Activated B cell treated with CpG ODN at 0.5 μM for 24 hours (primary cell): ENCODE measurements at regions of chrX and their contacts with region 1.

Region 1: DNA sequence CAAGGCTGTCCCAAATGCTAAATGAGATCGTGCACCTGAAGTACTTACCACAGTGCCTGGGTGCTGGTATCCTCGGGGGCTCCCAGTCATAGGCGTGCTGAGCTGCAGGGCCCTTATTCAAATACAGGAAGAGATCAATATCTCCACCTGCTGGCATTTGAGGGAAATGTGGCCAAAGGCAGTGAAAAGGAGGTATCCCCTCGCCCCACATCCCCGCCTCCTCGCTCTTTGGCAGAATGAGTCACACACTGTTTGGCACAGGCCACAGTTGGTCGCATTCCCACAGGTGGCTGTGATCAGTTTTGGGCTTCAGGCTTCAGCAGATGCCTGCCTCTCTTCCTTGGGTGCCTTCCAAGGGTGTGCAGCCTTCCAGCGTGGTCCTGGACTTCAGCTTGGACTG is 28.4 kb downstream of the ZNF185 start:
- DNase-seq: no peak
- ATAC-seq: peak; percentile 95
- H3K4me3 Mint-ChIP-seq: no peak overlapping the region
- H3K27ac Mint-ChIP-seq: no peak overlapping the region
- H3K4me1 Mint-ChIP-seq: no peaks in the 10 kb centered on the region
- H3K27me3 Mint-ChIP-seq: no peaks in the 10 kb centered on the region
- CTCF ChIP-seq: no peak

Region 2: GRCh38 chrX:151745651-151746050 is 1180.6 kb before region 1 on chrX:
- CTCF ChIA-PET with region 1: no interaction called
- POLR2A ChIA-PET with region 1: no interaction called
- intact Hi-C with region 1: loop called (anchors 5 kb)
- DNase-seq: no peak
- ATAC-seq: no peak
- H3K4me3 Mint-ChIP-seq: no peak overlapping the region
- H3K27ac Mint-ChIP-seq: no peak overlapping the region
- H3K4me1 Mint-ChIP-seq: no peaks in the 10 kb centered on the region
- H3K27me3 Mint-ChIP-seq: no peaks in the 10 kb centered on the region
- CTCF ChIP-seq: no peak

Region 3: DNA sequence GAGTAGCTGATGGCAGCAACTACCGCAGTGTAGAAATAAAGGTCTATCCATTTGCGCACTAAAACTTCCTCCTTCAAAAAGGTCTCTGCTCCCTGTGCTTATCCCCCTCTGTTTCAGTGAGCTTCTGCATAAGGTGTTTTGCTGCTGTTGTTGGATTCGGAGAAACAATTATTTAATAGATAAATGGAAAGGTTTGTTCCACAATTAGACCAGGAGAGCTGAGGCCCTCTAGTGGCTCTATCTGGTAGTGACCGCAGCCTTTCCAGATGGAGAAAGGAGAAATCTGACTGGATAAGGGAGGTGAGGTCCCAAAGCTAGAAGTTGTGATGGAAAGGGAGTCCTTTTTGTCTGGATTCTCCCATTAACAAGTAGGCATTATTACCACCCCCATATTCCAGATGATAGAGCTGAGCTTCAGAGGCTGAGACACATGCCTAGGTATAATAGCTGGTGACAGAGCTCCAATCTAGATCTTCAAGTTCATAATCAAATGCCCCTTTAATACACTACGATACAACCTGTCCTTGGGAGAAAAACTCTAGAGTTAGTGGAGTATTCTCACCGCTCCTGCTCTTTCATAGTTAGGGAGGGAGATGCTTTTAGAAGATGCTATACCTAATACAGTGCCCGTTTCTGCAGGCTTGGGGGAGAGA is 293.7 kb before region 1 on chrX:
- CTCF ChIA-PET with region 1: no interaction called
- POLR2A ChIA-PET with region 1: no interaction called
- intact Hi-C with region 1: loop called (anchors 5 kb)
- DNase-seq: no peak
- ATAC-seq: no peak
- H3K4me3 Mint-ChIP-seq: no peak overlapping the region
- H3K27ac Mint-ChIP-seq: no peak overlapping the region
- H3K4me1 Mint-ChIP-seq: no peaks in the 10 kb centered on the region
- H3K27me3 Mint-ChIP-seq: peaks cover 7% of the 10 kb centered on the region
- CTCF ChIP-seq: no peak

Region 4: GRCh38 chrX:152904151-152905080 is 21.9 kb before region 1 on chrX:
- CTCF ChIA-PET with region 1: no interaction called
- POLR2A ChIA-PET with region 1: no interaction called
- intact Hi-C with region 1: loop called (anchors 1 kb)
- DNase-seq: peak; percentile 25
- ATAC-seq: peak; percentile 71
- H3K4me3 Mint-ChIP-seq: no peak overlapping the region
- H3K27ac Mint-ChIP-seq: no peak overlapping the region
- H3K4me1 Mint-ChIP-seq: no peaks in the 10 kb centered on the region
- H3K27me3 Mint-ChIP-seq: peaks cover 6% of the 10 kb centered on the region
- CTCF ChIP-seq: no peak

Region 5: GRCh38 chrX:153075366-153075765 is 149.1 kb after region 1 on chrX:
- CTCF ChIA-PET with region 1: no interaction called
- POLR2A ChIA-PET with region 1: no interaction called
- intact Hi-C with region 1: no loop called
- DNase-seq: no peak
- ATAC-seq: no peak
- H3K4me3 Mint-ChIP-seq: no peak overlapping the region
- H3K27ac Mint-ChIP-seq: no peak overlapping the region
- H3K4me1 Mint-ChIP-seq: no peaks in the 10 kb centered on the region
- H3K27me3 Mint-ChIP-seq: no peaks in the 10 kb centered on the region
- CTCF ChIP-seq: no peak

Region 6: DNA sequence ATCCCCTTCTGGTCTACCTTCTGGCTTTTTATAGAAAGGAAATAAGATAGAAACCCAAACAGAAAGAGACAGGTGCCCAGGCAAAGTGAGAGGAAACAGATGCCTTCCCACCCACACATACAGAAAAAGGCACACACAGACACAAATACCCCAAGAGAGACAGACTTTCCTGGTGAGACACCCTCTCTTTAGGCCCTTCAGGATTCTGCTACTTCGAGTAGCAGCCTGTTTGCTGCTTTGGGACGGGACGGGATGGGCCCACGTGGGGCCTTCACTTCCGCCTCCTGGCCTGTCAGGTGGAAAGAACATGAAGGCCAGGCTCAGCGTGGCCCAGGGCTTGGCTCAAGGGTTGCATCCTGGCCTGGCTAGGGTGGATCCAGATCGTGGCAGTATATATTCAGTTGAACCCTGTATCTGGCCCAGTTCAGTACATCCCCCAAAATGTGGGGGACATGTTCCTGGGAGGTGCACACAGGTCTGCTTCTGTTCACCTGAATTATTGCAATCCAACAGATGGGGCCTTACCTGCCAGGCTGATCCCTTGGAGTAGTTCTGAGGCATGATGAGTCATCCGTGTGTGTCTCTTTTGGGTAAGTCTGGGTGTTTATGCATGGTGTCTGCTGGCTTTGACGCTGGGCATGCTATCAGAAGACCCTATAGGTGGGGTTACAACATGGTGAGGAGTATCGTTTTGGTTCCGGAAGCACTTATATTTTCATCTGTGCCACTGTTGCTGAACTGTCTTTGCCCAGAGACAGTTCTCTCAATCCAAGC is 410.0 kb after region 1 on chrX:
- CTCF ChIA-PET with region 1: no interaction called
- POLR2A ChIA-PET with region 1: no interaction called
- intact Hi-C with region 1: no loop called
- DNase-seq: no peak
- ATAC-seq: peak; percentile 8
- H3K4me3 Mint-ChIP-seq: peak overlapping the region; percentile 85
- H3K27ac Mint-ChIP-seq: peak overlapping the region; percentile 77
- H3K4me1 Mint-ChIP-seq: peaks cover 55% of the 10 kb centered on the region
- H3K27me3 Mint-ChIP-seq: no peaks in the 10 kb centered on the region
- CTCF ChIP-seq: no peak

Region 7: DNA sequence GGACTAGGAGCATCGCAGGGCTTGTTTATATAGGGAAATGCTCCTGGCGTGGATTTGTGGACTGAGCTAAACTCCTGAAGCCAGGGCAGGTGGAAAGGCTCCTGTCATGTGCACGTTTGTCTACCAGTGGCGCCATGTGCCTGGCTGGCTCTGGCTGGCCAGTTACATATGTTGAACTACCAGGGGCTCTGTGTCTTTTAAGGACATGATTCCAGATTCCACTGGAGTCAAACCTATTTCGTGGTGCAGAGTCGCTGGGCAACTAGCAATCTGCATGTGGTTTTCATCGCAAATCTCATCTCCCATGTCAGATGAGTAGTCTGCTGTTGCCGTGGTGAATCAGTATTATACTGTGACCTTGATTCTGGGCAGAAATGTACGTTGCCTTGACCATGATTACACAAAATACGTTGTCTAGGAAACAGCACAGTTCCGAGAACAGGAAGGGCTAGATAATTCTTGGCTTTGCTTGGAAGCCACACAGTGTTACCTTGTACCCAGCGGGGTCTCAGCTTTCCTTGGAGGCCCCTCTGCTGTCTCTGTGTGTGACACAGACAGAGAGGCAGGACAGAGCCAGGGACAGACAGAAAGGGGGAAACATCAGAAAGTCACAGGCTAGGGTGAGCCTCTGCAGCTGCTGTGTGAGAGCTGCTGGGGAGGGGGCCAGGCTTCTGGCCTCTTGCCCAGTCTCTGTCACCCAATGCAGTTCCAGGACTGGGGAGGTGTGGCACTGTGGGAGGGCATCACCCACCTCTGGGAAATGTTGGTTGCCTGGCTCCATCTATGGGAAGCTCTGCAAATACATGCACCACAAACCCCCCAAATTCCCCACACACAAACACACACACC is 455.6 kb after region 1 on chrX:
- CTCF ChIA-PET with region 1: no interaction called
- POLR2A ChIA-PET with region 1: no interaction called
- intact Hi-C with region 1: no loop called
- DNase-seq: no peak
- ATAC-seq: peak; percentile 45
- H3K4me3 Mint-ChIP-seq: no peak overlapping the region
- H3K27ac Mint-ChIP-seq: no peak overlapping the region
- H3K4me1 Mint-ChIP-seq: no peaks in the 10 kb centered on the region
- H3K27me3 Mint-ChIP-seq: no peaks in the 10 kb centered on the region
- CTCF ChIP-seq: no peak